CD8-positive, alpha-beta T cell (primary cell): ENCODE measurements at regions of chr3 and their contacts with region 1.

Region 1: GRCh38 chr3:151146071-151146730 is 56.8 kb downstream of the GPR171 start:
- DNase-seq: peak in 8 of 9 experiments; percentile 38 to 76 (median 58)
- ATAC-seq: peak; percentile 98
- H3K4me3 ChIP-seq: no peak overlapping the region
- H3K4me3 Mint-ChIP-seq: no peak overlapping the region
- H3K27ac ChIP-seq: no peak overlapping the region
- H3K27ac Mint-ChIP-seq: no peak overlapping the region
- H3K4me1 ChIP-seq: peaks cover 3% of the 10 kb centered on the region
- H3K4me1 Mint-ChIP-seq: no peaks in the 10 kb centered on the region
- H3K27me3 ChIP-seq: no peaks in the 10 kb centered on the region
- H3K27me3 Mint-ChIP-seq: peaks cover 8% of the 10 kb centered on the region
- CTCF ChIP-seq: peak; percentile 78

Region 2: GRCh38 chr3:150721285-150722130 is 424.7 kb before region 1 on chr3:
- CTCF ChIA-PET with region 1: interaction called, 4 read pairs
- POLR2A ChIA-PET with region 1: no interaction called
- intact Hi-C with region 1: loop called (anchors 1 kb)
- DNase-seq: peak in 2 of 9 experiments; percentile 73 to 80
- ATAC-seq: peak; percentile 91
- H3K4me3 ChIP-seq: no peak overlapping the region
- H3K4me3 Mint-ChIP-seq: no peak overlapping the region
- H3K27ac ChIP-seq: no peak overlapping the region
- H3K27ac Mint-ChIP-seq: no peak overlapping the region
- H3K4me1 ChIP-seq: no peaks in the 10 kb centered on the region
- H3K4me1 Mint-ChIP-seq: peaks cover 8% of the 10 kb centered on the region
- H3K27me3 ChIP-seq: no peaks in the 10 kb centered on the region
- H3K27me3 Mint-ChIP-seq: no peaks in the 10 kb centered on the region
- CTCF ChIP-seq: peak; percentile 90

Region 3: DNA sequence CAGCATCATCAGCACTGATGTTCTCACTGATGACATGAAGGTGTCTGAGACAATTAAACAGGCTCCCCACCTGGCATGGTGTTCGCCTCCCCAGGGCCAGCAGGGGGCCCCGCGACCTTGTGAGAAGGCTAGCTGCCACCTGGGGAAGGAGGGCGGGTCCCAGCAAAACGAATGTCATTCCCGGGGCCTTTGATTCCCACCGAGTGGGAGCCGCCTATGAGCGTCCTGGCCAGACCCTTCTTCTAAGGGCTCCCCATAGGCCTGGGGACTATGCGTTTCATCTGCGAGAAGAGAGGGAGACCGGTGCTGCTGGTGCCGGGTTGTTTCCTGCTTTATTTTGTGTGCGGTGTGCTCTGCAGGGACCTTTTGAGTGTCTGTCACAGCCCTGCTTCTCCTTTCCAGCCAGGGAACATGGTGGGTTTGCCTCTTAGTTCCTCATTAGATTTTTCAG is 220.4 kb before region 1 on chr3:
- CTCF ChIA-PET with region 1: interaction called, 48 read pairs
- POLR2A ChIA-PET with region 1: no interaction called
- intact Hi-C with region 1: loop called (anchors 1 kb)
- DNase-seq: peak; percentile 8 to 63 (median 51)
- ATAC-seq: peak; percentile 81
- H3K4me3 ChIP-seq: no peak overlapping the region
- H3K4me3 Mint-ChIP-seq: peak overlapping the region; percentile 55
- H3K27ac ChIP-seq: no peak overlapping the region
- H3K27ac Mint-ChIP-seq: no peak overlapping the region
- H3K4me1 ChIP-seq: no peaks in the 10 kb centered on the region
- H3K4me1 Mint-ChIP-seq: peaks cover 6% of the 10 kb centered on the region
- H3K27me3 ChIP-seq: no peaks in the 10 kb centered on the region
- H3K27me3 Mint-ChIP-seq: peaks cover 14% of the 10 kb centered on the region
- CTCF ChIP-seq: peak; percentile 60

Region 4: DNA sequence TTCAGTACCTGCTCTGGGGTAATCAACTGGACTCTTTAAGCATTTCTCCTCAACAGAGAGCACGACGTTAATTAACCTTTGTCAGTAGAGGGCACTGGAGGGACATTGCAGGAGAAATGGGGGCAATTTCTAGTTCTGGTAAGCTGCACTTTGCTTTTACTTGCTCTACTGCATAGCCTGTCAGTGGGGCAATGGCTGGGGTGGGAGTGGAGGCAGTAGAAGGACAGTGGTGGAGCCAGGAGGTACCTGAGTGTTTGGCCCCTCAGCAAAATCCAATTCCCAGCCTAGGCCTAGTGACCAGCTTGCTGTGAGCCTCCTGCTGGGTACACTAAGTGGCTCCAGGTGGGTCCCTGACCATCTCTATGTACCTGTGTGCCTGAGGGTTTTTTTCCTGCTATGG is 79.0 kb before region 1 on chr3:
- CTCF ChIA-PET with region 1: interaction called, 9 read pairs
- POLR2A ChIA-PET with region 1: no interaction called
- intact Hi-C with region 1: loop called in 1 of 2 experiments (anchors 1 kb)
- DNase-seq: peak in 2 of 9 experiments; percentile 13 to 21
- ATAC-seq: no peak
- H3K4me3 ChIP-seq: no peak overlapping the region
- H3K4me3 Mint-ChIP-seq: no peak overlapping the region
- H3K27ac ChIP-seq: no peak overlapping the region
- H3K27ac Mint-ChIP-seq: no peak overlapping the region
- H3K4me1 ChIP-seq: no peaks in the 10 kb centered on the region
- H3K4me1 Mint-ChIP-seq: no peaks in the 10 kb centered on the region
- H3K27me3 ChIP-seq: peaks cover 0 to 2% of the 10 kb centered on the region in 2 experiments
- H3K27me3 Mint-ChIP-seq: peaks cover 10% of the 10 kb centered on the region
- CTCF ChIP-seq: no peak

Region 5: GRCh38 chr3:151135541-151136337 is 10.5 kb before region 1 on chr3:
- CTCF ChIA-PET with region 1: interaction called, 24 read pairs
- POLR2A ChIA-PET with region 1: interaction called, 4 read pairs
- intact Hi-C with region 1: no loop called
- DNase-seq: peak in 8 of 9 experiments; percentile 17 to 71 (median 47)
- ATAC-seq: peak; percentile 81
- H3K4me3 ChIP-seq: no peak overlapping the region
- H3K4me3 Mint-ChIP-seq: peak overlapping the region; percentile 56
- H3K27ac ChIP-seq: peak overlapping the region; percentile 17 to 56
- H3K27ac Mint-ChIP-seq: peak overlapping the region; percentile 90
- H3K4me1 ChIP-seq: peaks cover 15% of the 10 kb centered on the region
- H3K4me1 Mint-ChIP-seq: peaks cover 31% of the 10 kb centered on the region
- H3K27me3 ChIP-seq: no peaks in the 10 kb centered on the region
- H3K27me3 Mint-ChIP-seq: no peaks in the 10 kb centered on the region
- CTCF ChIP-seq: no peak